A673 (cell line): ENCODE measurements at regions of chr2 and their contacts with region 1.

Region 1: GRCh38 chr2:166127217-166128155 is at the start of gene SCN1A:
- DNase-seq: peak; percentile 68
- H3K4me3 ChIP-seq: no peak within 1 kb of the TSS
- H3K27ac ChIP-seq: no peak within 1 kb of the TSS
- H3K4me1 ChIP-seq: peaks cover 12% of the 10 kb centered on the region
- H3K27me3 ChIP-seq: no peaks in the 10 kb centered on the region
- CTCF ChIP-seq: peak; percentile 75
- total RNA-seq, gene SCN1A: 0.62 and 0.83 TPM in 2 replicates

Region 2: DNA sequence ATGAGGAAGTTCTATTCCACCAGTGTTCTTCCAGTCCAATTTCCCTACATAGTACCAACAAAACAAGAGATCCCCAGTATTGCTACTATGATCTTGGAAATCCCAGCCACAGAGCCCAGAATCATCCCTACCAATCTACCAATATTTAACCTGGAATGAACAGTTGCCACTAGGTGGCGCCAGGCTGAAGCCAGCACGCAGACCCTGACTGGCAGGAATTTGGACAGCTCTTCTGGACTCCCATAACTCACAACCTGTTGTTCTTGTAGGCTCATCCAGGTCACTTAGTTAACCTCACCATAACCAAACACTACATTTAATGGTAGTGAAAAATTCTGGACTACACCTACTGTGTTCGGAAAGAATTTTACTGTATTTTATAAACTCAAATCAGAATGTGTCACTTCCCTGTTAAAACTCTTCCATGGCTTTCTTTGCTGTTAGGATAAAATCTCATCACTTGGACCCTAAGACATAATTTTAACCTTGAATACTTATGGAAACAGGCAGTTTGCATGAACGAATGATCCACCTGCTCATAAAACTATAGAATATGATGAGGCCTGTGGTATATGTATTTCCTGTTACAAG is 1112.3 kb before region 1 on chr2:
- CTCF ChIA-PET with region 1: interaction called, 7 read pairs
- POLR2A ChIA-PET with region 1: no interaction called
- intact Hi-C with region 1: loop called (anchors 10 kb)
- DNase-seq: peak; percentile 77
- H3K4me3 ChIP-seq: no peak overlapping the region
- H3K27ac ChIP-seq: no peak overlapping the region
- H3K4me1 ChIP-seq: no peaks in the 10 kb centered on the region
- H3K27me3 ChIP-seq: no peaks in the 10 kb centered on the region
- CTCF ChIP-seq: peak; percentile 98

Region 3: GRCh38 chr2:165634855-165635254 is 492.6 kb before region 1 on chr2:
- CTCF ChIA-PET with region 1: interaction called, 13 read pairs
- POLR2A ChIA-PET with region 1: no interaction called
- intact Hi-C with region 1: no loop called
- DNase-seq: peak; percentile 99
- H3K4me3 ChIP-seq: peak overlapping the region; percentile 15
- H3K27ac ChIP-seq: peak overlapping the region; percentile 75
- H3K4me1 ChIP-seq: peaks cover 87% of the 10 kb centered on the region
- H3K27me3 ChIP-seq: no peaks in the 10 kb centered on the region
- CTCF ChIP-seq: no peak

Region 4: DNA sequence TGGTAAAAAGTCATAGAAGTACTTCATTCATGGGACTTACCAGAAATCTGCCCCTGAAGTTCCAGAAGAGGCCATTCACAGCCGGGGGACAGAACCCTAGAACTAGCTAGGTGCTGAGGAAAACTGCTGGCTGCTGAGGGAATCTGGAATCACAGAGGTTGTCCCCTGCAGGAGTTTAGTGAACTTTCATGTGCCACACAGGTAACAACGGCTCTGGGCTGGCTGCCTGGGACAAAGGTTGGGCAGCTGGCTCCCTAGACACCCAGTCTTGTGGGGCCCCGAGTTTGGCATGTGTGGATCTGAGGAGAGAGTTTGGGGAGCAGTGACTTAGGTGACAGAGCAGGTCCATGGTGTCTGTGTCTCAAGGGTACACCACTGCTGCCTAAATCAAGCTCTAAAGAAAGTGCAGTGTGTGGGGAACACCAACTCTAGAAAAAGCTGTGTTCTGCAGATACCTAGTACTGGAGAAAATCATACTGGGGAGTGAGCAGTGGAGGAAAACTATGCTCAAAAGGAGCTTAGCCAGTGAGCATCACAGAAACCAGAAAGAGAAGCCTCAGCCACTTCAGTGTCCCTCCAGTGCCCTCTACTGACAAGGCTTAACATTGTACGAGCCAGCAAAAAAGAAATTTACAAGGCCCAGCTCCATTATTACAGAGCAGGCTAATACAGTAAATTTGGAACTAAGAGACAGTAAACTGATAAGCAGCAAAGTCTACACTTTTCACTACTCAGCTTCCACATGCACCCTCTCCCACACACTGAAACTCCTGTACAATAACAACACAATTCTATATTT is 348.6 kb before region 1 on chr2:
- CTCF ChIA-PET with region 1: no interaction called
- POLR2A ChIA-PET with region 1: interaction called, 21 read pairs
- intact Hi-C with region 1: no loop called
- DNase-seq: peak; percentile 66
- H3K4me3 ChIP-seq: no peak overlapping the region
- H3K27ac ChIP-seq: no peak overlapping the region
- H3K4me1 ChIP-seq: no peaks in the 10 kb centered on the region
- H3K27me3 ChIP-seq: no peaks in the 10 kb centered on the region
- CTCF ChIP-seq: peak; percentile 47

Region 5: GRCh38 chr2:165953655-165954606 is 173.6 kb before region 1 on chr2 and contains the start of gene TTC21B:
- CTCF ChIA-PET with region 1: interaction called, 15 read pairs
- POLR2A ChIA-PET with region 1: interaction called, 5 read pairs
- intact Hi-C with region 1: loop called (anchors 2 kb)
- DNase-seq: peak; percentile 99
- H3K4me3 ChIP-seq: peak within 1 kb of the TSS; percentile 68
- H3K27ac ChIP-seq: peak within 1 kb of the TSS; percentile 86
- H3K4me1 ChIP-seq: peaks cover 31% of the 10 kb centered on the region
- H3K27me3 ChIP-seq: no peaks in the 10 kb centered on the region
- CTCF ChIP-seq: peak; percentile 90
- total RNA-seq, gene TTC21B: 83.0 TPM in 2 replicates

Region 6: DNA sequence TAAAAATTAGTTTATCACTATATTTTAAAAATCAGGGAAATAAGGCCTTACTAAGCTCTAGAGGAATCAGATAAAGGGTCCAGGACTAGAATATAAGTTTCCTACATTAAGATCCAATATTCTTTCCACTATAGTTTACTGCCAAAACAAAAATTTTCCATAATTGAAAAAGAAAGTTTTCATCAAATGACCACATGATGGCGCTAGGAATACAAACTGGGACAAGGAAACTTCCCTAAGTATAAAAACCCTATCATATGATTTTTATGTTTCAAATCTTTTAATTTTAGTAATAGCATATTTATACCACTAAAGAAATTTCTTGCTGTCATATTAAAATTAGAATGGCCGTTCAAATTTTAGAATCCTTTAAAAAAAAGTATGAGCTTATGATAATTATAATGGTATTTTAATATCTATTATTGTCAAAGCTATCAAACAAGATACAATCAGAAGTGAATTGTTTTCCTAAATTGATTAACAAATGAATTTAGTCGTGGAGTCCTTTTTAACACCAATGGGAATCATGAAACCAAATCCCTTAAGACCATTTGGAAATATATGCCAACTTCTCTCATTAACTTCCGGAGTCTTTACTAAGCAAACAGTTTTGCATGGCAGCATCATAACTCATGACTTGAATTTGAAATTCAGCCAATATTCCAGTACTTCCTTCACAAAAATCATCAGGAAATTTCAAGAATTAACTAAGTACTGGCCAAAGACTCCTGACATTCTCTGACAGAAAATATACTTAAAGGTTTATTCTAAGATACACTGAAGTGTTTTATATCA is 69.9 kb before region 1 on chr2:
- CTCF ChIA-PET with region 1: interaction called, 18 read pairs
- POLR2A ChIA-PET with region 1: interaction called, 3 read pairs
- intact Hi-C with region 1: loop called (anchors 5 kb)
- DNase-seq: peak; percentile 48
- H3K4me3 ChIP-seq: no peak overlapping the region
- H3K27ac ChIP-seq: no peak overlapping the region
- H3K4me1 ChIP-seq: no peaks in the 10 kb centered on the region
- H3K27me3 ChIP-seq: no peaks in the 10 kb centered on the region
- CTCF ChIP-seq: peak; percentile 73

Region 7: GRCh38 chr2:166278856-166279255 is 151.4 kb after region 1 on chr2:
- CTCF ChIA-PET with region 1: no interaction called
- POLR2A ChIA-PET with region 1: no interaction called
- intact Hi-C with region 1: no loop called
- DNase-seq: no peak
- H3K4me3 ChIP-seq: no peak overlapping the region
- H3K27ac ChIP-seq: no peak overlapping the region
- H3K4me1 ChIP-seq: no peaks in the 10 kb centered on the region
- H3K27me3 ChIP-seq: no peaks in the 10 kb centered on the region
- CTCF ChIP-seq: no peak

Region 8: GRCh38 chr2:166335284-166335683 is 207.8 kb after region 1 on chr2:
- CTCF ChIA-PET with region 1: no interaction called
- POLR2A ChIA-PET with region 1: no interaction called
- intact Hi-C with region 1: no loop called
- DNase-seq: no peak
- H3K4me3 ChIP-seq: no peak overlapping the region
- H3K27ac ChIP-seq: no peak overlapping the region
- H3K4me1 ChIP-seq: no peaks in the 10 kb centered on the region
- H3K27me3 ChIP-seq: no peaks in the 10 kb centered on the region
- CTCF ChIP-seq: no peak

Region 9: DNA sequence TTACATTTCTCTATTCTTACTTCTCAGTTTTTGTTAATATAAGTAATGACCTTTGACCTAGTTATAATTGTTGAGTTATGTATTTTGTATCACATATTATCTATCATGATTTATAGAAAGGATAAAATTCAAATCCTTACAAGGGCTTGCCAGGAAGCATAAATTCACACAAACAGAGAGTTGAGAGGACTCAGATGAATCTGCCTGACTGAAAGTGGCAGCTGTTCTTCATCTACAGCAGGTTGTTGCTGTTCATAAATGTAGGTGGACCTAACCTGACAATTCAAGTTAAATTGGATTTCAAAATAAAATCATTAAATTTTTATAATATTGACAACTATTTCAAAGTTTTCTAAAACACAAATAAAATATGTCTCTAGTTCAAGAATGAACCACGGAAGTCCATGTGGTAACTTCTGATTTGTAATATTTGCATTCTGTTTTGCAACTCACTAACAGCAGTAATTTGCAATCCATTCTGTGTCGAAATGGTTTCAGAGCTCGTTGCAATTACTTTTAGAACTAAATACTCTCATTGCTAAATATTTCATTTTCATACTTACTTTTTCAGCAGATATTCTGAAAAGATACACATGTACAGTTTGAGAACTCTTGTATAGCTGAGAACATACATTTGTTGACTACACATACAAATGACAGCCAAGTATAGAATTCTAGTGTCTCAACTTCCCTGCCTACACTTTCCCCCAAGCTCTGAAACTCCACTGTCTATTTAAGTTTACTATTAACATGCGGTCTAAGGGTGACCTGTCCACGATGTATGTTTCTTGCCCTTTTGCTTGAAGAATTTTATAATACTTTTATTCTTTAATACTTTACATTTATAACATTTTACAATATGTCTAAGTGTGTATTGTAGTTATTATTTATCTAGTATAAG is 340.9 kb after region 1 on chr2:
- CTCF ChIA-PET with region 1: no interaction called
- POLR2A ChIA-PET with region 1: no interaction called
- intact Hi-C with region 1: no loop called
- DNase-seq: no peak
- H3K4me3 ChIP-seq: no peak overlapping the region
- H3K27ac ChIP-seq: no peak overlapping the region
- H3K4me1 ChIP-seq: no peaks in the 10 kb centered on the region
- H3K27me3 ChIP-seq: no peaks in the 10 kb centered on the region
- CTCF ChIP-seq: no peak